ENCODE measurements at regions of chr9 and their contacts with region 1.

Region 1: DNA sequence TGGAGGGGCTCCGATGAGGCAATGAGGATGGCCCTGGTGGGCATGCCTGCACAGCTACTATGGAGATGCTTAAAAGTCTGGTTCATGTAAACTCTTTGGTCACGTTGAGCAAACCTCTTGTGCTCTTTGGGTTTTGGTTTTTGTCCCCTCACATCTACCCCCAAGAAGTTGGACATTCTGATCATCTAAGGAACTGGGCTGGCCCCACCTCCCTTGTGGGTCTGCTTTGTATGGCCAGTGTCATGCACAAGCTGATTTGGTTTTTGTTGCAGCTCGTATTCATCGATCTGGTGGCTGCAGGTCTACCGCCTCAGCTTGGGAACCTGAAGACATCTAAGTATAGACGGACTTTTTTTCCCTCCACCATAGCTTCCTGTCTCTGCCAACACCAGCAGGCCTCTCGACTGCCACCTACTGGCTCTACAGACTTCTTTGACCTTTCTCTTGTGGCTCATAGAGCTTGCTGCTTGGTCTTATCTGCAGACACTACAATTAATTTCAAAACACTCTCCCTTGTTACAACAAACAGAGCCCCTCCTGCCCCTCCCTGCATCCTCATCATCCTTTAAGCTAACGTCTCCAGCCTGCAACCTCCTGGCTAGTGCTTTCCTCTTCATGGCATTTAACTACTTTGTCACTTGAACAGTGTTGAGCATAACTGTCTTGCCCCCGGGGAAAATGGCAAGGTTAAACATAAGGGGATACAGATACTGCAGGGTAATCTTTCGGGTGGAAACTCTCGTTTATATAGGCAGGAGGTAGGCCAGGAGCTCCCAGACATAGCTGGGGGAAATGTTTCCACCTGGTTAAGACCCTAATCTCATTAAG is 34.5 kb downstream of the TSTD2 start:
- DNase-seq: peak; percentile 77
- H3K4me3 Mint-ChIP-seq: no peak overlapping the region
- H3K27ac Mint-ChIP-seq: no peak overlapping the region
- H3K4me1 Mint-ChIP-seq: peaks cover 7% of the 10 kb centered on the region
- H3K27me3 Mint-ChIP-seq: no peaks in the 10 kb centered on the region

Region 2: GRCh38 chr9:96854073-96854876 is 744.4 kb before region 1 on chr9 and contains the start of gene ZNF782:
- CTCF ChIA-PET with region 1: interaction called, 14 read pairs
- POLR2A ChIA-PET with region 1: no interaction called
- DNase-seq: peak; percentile 88
- H3K4me3 Mint-ChIP-seq: peak within 1 kb of the TSS; percentile 99
- H3K27ac Mint-ChIP-seq: peak within 1 kb of the TSS; percentile 82
- H3K4me1 Mint-ChIP-seq: peaks cover 31% of the 10 kb centered on the region
- H3K27me3 Mint-ChIP-seq: peaks cover 17% of the 10 kb centered on the region
- total RNA-seq, gene ZNF782: 3.1 to 4.2 TPM

Region 3: GRCh38 chr9:97362266-97363160 is 236.2 kb before region 1 on chr9:
- CTCF ChIA-PET with region 1: no interaction called
- POLR2A ChIA-PET with region 1: no interaction called
- DNase-seq: no peak
- H3K4me3 Mint-ChIP-seq: no peak overlapping the region
- H3K27ac Mint-ChIP-seq: no peak overlapping the region
- H3K4me1 Mint-ChIP-seq: peaks cover 11% of the 10 kb centered on the region
- H3K27me3 Mint-ChIP-seq: no peaks in the 10 kb centered on the region

Region 4: GRCh38 chr9:97411789-97412625 is 186.7 kb before region 1 on chr9 and contains the start of gene TDRD7:
- CTCF ChIA-PET with region 1: interaction called, 15 read pairs
- POLR2A ChIA-PET with region 1: no interaction called
- DNase-seq: peak; percentile 91
- H3K4me3 Mint-ChIP-seq: peak within 1 kb of the TSS; percentile 84
- H3K27ac Mint-ChIP-seq: peak within 1 kb of the TSS; percentile 68
- H3K4me1 Mint-ChIP-seq: peaks cover 28% of the 10 kb centered on the region
- H3K27me3 Mint-ChIP-seq: peaks cover 33% of the 10 kb centered on the region
- total RNA-seq, gene TDRD7: 19.4 to 19.8 TPM

Region 5: DNA sequence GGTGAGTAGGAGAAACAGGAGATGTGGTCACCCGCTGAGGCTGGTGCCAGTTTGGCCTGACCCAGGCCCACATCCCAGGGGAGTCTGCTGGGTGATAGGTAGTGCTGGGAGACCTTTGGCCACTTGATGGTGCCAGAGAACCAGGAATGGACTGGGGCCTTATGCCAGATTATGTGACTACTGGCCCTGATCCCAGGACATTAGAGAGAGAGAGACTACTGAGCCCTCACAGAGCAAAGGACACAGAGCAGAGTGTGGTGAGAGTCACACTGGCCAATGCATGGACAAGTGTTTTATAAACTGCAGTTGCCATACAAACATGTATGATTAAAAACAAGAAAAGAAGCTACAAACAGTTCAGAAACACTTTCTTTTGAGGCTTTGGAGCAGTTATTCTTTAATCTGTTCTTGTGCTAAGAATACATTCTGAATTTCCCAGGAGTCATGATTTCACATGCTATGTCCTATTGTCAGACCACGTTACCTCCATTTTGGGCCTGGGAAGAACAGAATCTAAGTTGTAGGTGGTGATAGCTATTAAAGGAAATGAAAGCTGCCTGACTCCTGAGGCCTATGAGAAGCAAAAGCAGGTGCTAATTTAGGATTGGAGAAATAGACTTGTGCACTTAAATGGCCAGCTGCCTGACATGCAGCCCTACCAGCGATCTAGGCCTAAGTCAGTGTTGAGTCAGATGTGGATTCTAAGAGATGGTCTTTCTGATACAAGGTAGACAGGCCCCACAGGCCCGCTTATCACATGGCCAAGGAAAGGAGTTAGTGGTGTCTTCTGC is 129.8 kb before region 1 on chr9:
- CTCF ChIA-PET with region 1: interaction called, 89 read pairs
- POLR2A ChIA-PET with region 1: interaction called, 4 read pairs
- DNase-seq: peak; percentile 46
- H3K4me3 Mint-ChIP-seq: no peak overlapping the region
- H3K27ac Mint-ChIP-seq: no peak overlapping the region
- H3K4me1 Mint-ChIP-seq: no peaks in the 10 kb centered on the region
- H3K27me3 Mint-ChIP-seq: no peaks in the 10 kb centered on the region

Region 6: DNA sequence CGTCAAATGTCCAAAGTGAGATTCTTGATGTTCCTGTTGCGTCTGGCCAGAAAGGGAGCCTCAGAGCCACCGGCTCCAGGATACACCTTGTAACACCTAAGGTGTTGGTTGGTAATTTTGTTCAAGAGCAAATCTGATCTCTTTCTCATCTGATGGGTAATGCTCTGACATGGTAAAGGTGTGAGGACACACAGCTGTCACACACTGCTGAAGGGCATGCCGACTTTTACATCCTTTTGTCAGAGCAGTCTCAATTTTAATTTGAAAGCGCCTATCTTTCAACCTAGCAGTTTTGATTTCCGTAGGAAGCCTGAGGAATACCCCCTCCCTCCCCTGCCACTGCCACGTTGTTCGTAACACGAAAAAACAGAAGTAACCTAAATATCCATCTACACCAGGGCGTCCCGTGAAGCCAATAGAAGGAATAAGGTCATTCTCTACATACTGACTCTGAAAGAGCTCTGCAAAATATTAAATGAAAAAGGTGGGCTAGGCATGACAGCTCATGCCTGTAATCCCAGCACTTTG is 22.9 kb before region 1 on chr9:
- CTCF ChIA-PET with region 1: interaction called, 11 read pairs
- POLR2A ChIA-PET with region 1: no interaction called
- DNase-seq: no peak
- H3K4me3 Mint-ChIP-seq: peak overlapping the region; percentile 75
- H3K27ac Mint-ChIP-seq: no peak overlapping the region
- H3K4me1 Mint-ChIP-seq: peaks cover 17% of the 10 kb centered on the region
- H3K27me3 Mint-ChIP-seq: no peaks in the 10 kb centered on the region

Region 7: DNA sequence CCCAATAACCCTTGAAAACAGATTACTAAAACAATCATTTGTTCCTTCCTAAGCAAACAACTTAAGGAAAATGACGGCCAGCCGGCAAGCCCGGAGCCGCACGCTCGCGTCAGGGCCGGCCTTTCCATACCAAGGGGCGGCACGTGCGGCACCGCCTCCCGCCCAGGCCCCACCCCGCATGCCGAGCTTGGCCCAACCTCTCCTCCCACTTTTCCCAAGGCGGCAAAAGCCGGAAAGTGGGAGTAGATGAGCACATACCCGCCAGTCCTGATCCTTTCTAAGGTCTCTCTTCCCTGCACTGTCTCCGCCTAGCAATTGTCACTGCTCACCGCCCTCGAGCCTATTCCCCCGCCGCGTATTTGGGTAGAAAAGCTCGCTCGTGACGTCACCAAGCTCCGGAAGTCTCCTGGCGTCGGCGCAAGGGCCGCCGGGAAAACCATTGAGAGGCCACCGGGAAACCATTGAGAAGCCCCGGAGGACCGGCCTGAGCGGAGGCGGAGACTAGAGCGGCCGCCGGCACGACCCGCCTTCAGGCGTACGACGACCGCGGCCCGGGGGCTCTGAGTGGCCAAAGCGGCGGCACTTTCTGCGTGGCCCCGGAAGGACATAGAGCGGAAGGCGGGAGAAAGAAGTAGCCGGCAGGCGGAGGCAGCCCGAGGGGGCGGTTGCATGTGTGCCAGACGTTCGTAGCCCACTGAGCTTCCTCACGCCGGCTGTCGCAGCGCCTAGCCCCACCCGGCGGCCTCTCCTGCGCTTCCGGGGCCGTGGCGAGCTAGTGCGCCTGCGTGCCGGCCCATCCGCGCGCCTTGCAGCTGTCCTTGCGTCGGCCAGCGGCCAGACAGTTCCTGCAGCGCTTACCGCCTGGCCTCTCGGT is 34.5 kb after region 1 on chr9 and contains the starts of genes NCBP1 and TSTD2:
- CTCF ChIA-PET with region 1: interaction called, 22 read pairs
- POLR2A ChIA-PET with region 1: interaction called, 5 read pairs
- DNase-seq: peak; percentile 97
- H3K4me3 Mint-ChIP-seq: peak within 1 kb of the TSS; percentile 86
- H3K27ac Mint-ChIP-seq: peak within 1 kb of the TSS; percentile 97
- H3K4me1 Mint-ChIP-seq: peaks cover 49% of the 10 kb centered on the region
- H3K27me3 Mint-ChIP-seq: no peaks in the 10 kb centered on the region
- total RNA-seq, gene NCBP1: 34.5 to 36.5 TPM
- total RNA-seq, gene TSTD2: 10.5 to 12.2 TPM

Measured in activated CD4-positive, alpha-beta memory T cell treated with anti-CD3 and anti-CD28 coated beads, Interleukin-2, amount 10 ng/mL, durations not matched to agents 7 days and 5 days (primary cell).